Panc1 (cell line): ENCODE measurements at regions of chr9 and their contacts with region 1.

Region 1: GRCh38 chr9:77488439-77489126 is 159.5 kb downstream of the GNA14 start:
- DNase-seq: no peak
- ATAC-seq: no peak
- H3K4me3 ChIP-seq: no peak overlapping the region
- H3K27ac ChIP-seq: no peak overlapping the region
- H3K4me1 ChIP-seq: no peaks in the 10 kb centered on the region
- H3K27me3 ChIP-seq: no peaks in the 10 kb centered on the region
- CTCF ChIP-seq: peak; percentile 53

Region 2: DNA sequence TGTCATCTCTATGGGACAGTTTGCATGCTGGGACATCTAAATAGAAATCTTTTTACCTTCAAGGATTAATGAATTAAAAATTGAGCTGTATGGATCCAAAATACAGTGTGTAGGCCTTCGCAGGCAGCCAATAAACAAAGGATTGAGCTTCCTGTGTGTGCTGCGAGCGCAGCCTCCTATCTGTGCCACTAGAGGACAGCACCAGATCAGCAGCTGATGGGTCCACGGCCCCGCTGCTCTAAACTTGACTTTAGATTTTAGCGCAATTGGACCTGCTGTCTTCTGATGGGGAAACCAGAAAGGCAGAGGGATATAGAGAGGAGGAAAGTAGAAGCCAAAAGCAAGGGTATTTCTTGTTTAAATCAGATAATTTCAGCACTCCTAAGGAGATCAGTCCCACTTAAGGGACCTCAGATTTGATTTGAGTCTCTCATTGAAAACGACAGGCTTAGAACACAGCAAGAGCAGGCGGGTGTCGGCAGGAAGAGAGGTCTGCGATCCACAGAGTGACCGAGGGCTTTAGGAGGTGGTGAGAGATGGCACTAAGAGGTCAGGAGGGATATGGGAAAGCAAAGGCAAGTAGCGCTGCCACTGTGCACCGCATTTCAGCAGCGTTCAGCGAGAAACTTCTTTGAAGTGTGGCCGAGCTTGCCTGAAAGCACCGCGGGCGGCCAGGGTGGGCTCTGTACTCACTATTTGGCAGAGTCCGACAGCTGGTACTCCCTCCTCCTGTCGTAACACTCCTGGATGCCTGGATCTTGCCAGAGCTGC is 54.7 kb before region 1 on chr9:
- CTCF ChIA-PET with region 1: no interaction called
- POLR2A ChIA-PET with region 1: no interaction called
- in situ Hi-C with region 1: no loop called
- intact Hi-C with region 1: no loop called
- DNase-seq: no peak
- ATAC-seq: peak; percentile 95
- H3K4me3 ChIP-seq: peak overlapping the region in 1 of 2 experiments; percentile 26; a peak in 2 of 4 replicates
- H3K27ac ChIP-seq: no peak overlapping the region
- H3K4me1 ChIP-seq: no peaks in the 10 kb centered on the region
- H3K27me3 ChIP-seq: no peaks in the 10 kb centered on the region
- CTCF ChIP-seq: peak; percentile 97

Region 3: DNA sequence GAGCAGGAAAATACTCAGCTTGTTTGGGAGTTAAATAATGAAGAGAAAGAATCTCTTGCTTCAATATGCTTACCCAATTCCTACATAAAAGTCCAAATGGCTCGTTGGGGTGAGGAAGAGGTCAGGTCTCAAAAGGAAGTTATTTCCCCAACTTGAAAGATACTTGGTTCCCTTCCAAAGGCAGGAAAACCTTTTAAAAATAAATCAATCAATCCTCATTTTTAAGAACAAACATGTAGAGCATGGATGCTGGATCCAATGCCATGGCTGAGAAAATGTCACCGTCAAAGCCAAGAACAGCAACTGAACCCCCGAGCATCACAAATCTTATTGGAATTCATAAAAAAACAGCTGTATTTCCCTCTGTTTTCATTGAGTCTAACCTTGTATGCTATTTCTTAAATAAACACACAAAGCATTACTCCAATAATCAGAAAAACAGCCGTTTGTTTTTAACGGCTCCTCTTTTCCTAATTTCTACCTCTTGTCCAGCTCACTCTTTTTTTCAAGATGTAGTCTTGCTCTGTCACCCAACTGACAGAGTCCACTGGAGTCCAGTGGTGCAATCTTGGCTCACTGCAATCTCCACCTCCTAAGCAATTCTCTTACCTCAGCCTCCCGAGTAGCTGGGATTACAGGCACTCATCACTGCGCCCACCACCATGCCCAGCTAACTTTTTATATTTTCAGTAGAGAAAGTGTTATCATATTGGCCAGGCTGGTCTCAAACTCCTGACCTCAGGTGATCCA is 18.8 kb after region 1 on chr9:
- CTCF ChIA-PET with region 1: interaction called, 12 read pairs
- POLR2A ChIA-PET with region 1: no interaction called
- in situ Hi-C with region 1: no loop called
- intact Hi-C with region 1: no loop called
- DNase-seq: no peak
- ATAC-seq: no peak
- H3K4me3 ChIP-seq: no peak overlapping the region
- H3K27ac ChIP-seq: no peak overlapping the region
- H3K4me1 ChIP-seq: no peaks in the 10 kb centered on the region
- H3K27me3 ChIP-seq: no peaks in the 10 kb centered on the region
- CTCF ChIP-seq: no peak

Region 4: DNA sequence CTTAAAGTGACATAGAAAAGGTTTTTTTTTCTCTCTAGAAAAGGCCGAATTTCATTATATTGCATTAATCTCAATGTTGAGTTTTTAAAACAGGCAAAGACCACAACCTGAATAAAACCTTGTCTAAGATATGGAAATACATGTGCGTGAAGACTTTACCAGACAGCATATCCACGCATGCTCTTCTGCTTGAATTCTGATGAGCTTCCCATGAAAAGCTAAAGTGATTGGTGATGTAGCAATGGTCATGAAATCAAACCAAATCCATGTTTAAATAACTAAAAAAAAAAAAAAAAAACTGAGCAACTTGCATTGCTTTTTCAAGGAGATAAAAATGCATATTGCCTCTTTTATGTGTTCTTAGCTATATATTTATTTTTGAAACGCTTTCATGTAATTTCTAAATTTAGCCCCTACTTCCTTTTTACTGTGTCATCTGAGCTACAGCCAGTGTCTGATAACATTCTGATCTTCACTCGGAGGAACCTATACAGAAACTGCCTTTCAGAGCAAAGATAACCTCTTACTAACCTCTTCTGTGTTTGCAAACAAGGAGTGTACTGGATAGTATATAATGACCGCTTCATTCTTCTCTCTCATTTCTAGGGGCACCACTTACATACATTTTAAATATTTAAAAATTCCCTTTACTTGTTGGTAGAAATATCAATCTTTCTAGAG is 338.7 kb after region 1 on chr9:
- CTCF ChIA-PET with region 1: no interaction called
- POLR2A ChIA-PET with region 1: no interaction called
- in situ Hi-C with region 1: no loop called
- intact Hi-C with region 1: no loop called
- DNase-seq: no peak
- ATAC-seq: no peak
- H3K4me3 ChIP-seq: no peak overlapping the region
- H3K27ac ChIP-seq: no peak overlapping the region
- H3K4me1 ChIP-seq: no peaks in the 10 kb centered on the region
- H3K27me3 ChIP-seq: no peaks in the 10 kb centered on the region
- CTCF ChIP-seq: no peak

Region 5: GRCh38 chr9:78101247-78101646 is 612.7 kb after region 1 on chr9:
- CTCF ChIA-PET with region 1: no interaction called
- POLR2A ChIA-PET with region 1: interaction called, 10 read pairs
- in situ Hi-C with region 1: no loop called
- intact Hi-C with region 1: no loop called
- DNase-seq: no peak
- ATAC-seq: no peak
- H3K4me3 ChIP-seq: no peak overlapping the region
- H3K27ac ChIP-seq: no peak overlapping the region
- H3K4me1 ChIP-seq: no peaks in the 10 kb centered on the region
- H3K27me3 ChIP-seq: peaks cover 3% of the 10 kb centered on the region
- CTCF ChIP-seq: no peak